ENCODE measurements at regions of chr6 and their contacts with region 1.

Region 1: DNA sequence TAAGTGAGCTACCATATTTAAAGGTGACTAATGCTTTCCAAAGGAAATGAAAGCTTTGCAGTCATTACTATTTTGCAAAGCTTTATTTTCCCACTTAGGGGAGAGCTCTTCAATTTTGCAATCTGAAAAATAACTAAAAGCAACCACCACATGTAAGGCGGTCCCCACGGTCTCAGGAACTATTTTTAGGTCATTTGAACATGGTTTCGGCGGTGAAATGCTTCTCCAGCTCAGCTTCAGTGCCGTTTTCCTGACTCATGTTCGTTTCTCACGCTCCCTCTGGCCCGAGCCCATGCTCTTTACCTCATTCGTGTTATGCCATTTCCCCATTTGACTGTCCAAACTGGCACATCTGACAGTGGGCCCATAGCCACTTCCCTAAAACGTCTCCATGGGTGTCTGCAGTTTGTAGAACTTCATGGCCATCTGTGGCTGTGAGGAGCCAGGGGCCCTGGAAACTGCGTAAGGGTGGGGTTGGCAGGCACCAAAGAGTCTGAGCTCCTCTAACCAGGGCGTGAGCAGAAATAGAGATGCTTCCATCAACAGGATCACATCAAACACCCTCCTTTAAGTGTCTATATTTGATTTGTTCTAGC is 46.5 kb downstream of the ADTRP start:
- DNase-seq: peak; percentile 76
- H3K4me3 Mint-ChIP-seq: peak overlapping the region; percentile 64
- H3K27ac Mint-ChIP-seq: peak overlapping the region; percentile 93
- H3K4me1 Mint-ChIP-seq: peaks cover 61% of the 10 kb centered on the region
- H3K27me3 Mint-ChIP-seq: no peaks in the 10 kb centered on the region

Region 2: DNA sequence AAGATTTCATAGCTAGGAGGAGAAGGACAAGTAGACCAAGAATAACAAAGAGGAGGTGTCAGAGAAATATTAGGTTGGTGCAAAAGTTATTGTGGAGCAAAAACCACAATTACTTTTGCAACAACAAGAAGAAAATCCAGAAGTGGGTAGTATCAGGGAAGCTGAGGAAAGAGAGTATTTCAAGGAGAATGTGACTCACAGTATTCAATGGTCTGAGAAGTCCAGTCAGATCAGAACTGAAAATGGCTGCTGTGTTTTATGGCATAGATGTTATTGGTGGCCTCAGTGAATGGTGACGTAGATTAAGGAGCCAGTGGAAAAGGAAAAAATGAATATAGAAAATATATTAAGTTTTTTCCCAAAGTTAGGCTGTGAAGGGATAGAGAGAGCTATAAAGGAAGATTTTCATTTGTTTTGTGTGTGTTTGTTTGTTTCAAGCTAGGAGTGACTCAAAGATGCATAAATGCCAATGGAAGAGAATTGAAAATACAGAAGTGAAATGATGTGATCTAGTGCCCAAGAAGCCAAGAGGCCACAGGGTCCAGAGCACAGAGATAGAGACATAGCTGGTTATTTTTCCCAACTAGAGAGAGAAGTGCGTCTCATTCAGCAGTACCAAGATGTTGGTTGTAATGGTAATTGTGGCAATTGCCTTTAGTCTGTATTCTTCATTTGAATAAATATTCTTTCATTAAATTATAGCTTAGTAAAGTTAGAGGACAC is 66.4 kb before region 1 on chr6:
- intact Hi-C with region 1: loop called (anchors 5 kb)
- DNase-seq: no peak
- H3K4me3 Mint-ChIP-seq: no peak overlapping the region
- H3K27ac Mint-ChIP-seq: peak overlapping the region; percentile 76
- H3K4me1 Mint-ChIP-seq: peaks cover 12% of the 10 kb centered on the region
- H3K27me3 Mint-ChIP-seq: peaks cover 2% of the 10 kb centered on the region

Region 3: DNA sequence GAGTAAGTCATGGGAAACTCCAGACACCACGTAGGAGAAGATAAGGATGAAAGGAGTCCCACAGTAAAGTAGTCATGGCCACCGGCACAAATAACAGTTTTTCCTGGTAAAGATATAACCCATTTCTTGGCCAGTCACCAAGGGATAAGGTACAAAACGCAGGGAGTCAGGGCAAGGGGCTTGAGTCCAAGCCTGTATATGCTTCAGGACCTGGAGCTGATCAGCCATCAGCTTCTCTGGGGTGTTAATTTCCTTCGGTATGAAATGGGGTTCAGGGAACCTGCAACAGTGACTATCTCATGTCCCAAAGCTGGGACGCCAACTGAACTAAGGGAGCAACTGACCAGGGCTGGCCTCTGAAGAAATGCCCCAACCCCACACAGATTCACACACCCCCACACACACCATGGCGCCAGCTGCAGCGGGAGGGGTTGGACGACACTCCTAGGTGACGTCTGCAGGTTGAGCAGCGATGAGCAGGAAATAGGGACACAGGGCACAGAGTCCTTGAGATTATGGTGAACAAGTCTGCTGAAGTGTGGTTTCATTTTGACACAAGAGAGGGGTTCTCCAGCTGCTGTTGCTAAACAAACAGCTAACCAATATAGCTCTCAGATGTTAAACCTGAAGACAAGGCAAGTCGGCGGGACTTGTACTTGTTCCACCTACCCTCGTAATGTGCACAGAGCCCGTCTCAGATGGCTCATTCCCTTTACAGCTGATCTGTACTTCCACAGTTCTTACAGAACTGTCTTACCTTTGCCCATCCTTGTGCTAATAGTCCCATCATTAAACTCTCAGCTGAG is 53.8 kb after region 1 on chr6:
- intact Hi-C with region 1: loop called (anchors 1 kb)
- DNase-seq: peak; percentile 82
- H3K4me3 Mint-ChIP-seq: peak overlapping the region; percentile 46
- H3K27ac Mint-ChIP-seq: peak overlapping the region; percentile 72
- H3K4me1 Mint-ChIP-seq: peaks cover 7% of the 10 kb centered on the region
- H3K27me3 Mint-ChIP-seq: no peaks in the 10 kb centered on the region

Region 4: DNA sequence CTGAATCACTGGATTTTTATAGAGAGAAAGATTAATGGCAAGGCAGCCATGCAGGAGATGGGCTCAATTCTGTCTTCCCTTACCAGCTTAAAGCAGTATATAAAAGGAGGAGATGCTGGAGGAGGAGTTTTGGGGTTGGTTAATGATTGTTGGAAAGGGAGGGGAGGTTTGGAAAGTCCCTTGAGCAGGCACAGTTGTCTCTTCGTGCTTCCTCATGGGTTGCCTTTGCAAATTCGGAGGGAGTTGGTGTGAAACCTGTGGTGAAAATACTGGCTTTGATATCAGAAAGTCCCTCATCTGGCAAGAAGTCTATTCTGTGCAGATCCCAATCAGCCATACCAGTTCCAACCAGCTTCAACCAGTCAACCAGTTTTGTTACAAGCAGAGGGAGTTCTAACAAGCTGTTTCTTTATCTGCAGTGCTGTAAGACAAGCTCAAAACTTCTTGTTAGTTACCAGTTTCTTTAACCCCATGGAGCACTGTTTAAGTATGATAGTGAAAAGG is 387.0 kb after region 1 on chr6:
- intact Hi-C with region 1: loop called (anchors 5 kb)
- DNase-seq: peak; percentile 92
- H3K4me3 Mint-ChIP-seq: peak overlapping the region; percentile 41
- H3K27ac Mint-ChIP-seq: peak overlapping the region; percentile 78
- H3K4me1 Mint-ChIP-seq: peaks cover 64% of the 10 kb centered on the region
- H3K27me3 Mint-ChIP-seq: no peaks in the 10 kb centered on the region